MCF 10A (cell line): ENCODE measurements at regions of chr4 and their contacts with region 1.

Region 1: GRCh38 chr4:103915224-103915869 is 195.6 kb upstream of the TACR3 start:
- DNase-seq: peak; percentile 49
- H3K4me3 Mint-ChIP-seq: no peak overlapping the region
- H3K27ac Mint-ChIP-seq: peak overlapping the region; percentile 19
- H3K4me1 Mint-ChIP-seq: no peaks in the 10 kb centered on the region
- H3K27me3 Mint-ChIP-seq: no peaks in the 10 kb centered on the region
- CTCF ChIP-seq: peak; percentile 44

Region 2: GRCh38 chr4:103478729-103479128 is 436.6 kb before region 1 on chr4:
- CTCF ChIA-PET with region 1: no interaction called
- POLR2A ChIA-PET with region 1: no interaction called
- intact Hi-C with region 1: loop called (anchors 1 kb)
- DNase-seq: peak; percentile 33
- H3K4me3 Mint-ChIP-seq: no peak overlapping the region
- H3K27ac Mint-ChIP-seq: no peak overlapping the region
- H3K4me1 Mint-ChIP-seq: no peaks in the 10 kb centered on the region
- H3K27me3 Mint-ChIP-seq: no peaks in the 10 kb centered on the region
- CTCF ChIP-seq: no peak

Region 3: DNA sequence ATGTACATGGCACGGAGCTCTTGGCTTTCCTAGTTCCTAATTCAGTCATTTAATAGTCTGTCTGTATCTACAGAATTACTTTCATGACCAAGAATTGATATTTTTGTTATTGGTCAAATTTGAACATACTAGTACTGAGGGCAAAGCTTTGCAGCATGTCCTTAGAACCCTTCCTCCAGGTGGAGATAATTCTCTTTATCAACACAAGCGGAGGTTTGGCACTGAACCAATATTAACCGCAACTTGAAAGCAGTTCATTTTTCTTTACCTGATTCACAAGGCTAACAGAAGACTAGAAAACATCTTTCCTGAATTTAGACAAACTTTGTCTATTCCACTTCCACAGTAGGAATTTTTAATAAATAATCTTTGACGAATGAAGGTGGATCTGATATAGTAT is 269.4 kb before region 1 on chr4:
- CTCF ChIA-PET with region 1: interaction called, 3 read pairs
- POLR2A ChIA-PET with region 1: no interaction called
- intact Hi-C with region 1: loop called (anchors 5 kb)
- DNase-seq: peak; percentile 42
- H3K4me3 Mint-ChIP-seq: no peak overlapping the region
- H3K27ac Mint-ChIP-seq: no peak overlapping the region
- H3K4me1 Mint-ChIP-seq: no peaks in the 10 kb centered on the region
- H3K27me3 Mint-ChIP-seq: no peaks in the 10 kb centered on the region
- CTCF ChIP-seq: no peak

Region 4: GRCh38 chr4:103902730-103903129 is 12.6 kb before region 1 on chr4:
- CTCF ChIA-PET with region 1: interaction called, 14 read pairs
- POLR2A ChIA-PET with region 1: no interaction called
- intact Hi-C with region 1: no loop called
- DNase-seq: no peak
- H3K4me3 Mint-ChIP-seq: no peak overlapping the region
- H3K27ac Mint-ChIP-seq: no peak overlapping the region
- H3K4me1 Mint-ChIP-seq: no peaks in the 10 kb centered on the region
- H3K27me3 Mint-ChIP-seq: no peaks in the 10 kb centered on the region
- CTCF ChIP-seq: no peak

Region 5: DNA sequence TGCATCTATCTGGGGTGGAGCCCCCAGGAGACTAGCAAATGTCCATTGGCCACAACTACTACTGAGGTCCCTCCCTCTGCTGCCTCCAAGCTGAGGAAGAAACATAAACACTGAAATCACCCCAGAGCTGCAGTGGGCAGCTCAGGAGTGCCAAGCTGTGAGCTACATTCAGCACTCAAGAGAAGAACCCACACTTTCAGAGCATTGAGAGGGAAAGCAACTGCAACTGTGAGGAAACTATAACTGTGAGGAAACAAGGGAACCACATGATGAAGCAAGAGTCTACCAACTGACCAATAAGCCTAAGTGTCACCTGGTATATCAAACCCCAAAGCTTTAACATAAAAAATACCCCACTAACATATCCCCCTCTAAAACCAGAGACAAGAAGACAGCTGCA is 177.9 kb after region 1 on chr4:
- CTCF ChIA-PET with region 1: no interaction called
- POLR2A ChIA-PET with region 1: no interaction called
- intact Hi-C with region 1: no loop called
- DNase-seq: no peak
- H3K4me3 Mint-ChIP-seq: no peak overlapping the region
- H3K27ac Mint-ChIP-seq: no peak overlapping the region
- H3K4me1 Mint-ChIP-seq: no peaks in the 10 kb centered on the region
- H3K27me3 Mint-ChIP-seq: no peaks in the 10 kb centered on the region
- CTCF ChIP-seq: no peak

Region 6: GRCh38 chr4:105068516-105068915 is 1153.2 kb after region 1 on chr4:
- CTCF ChIA-PET with region 1: no interaction called
- POLR2A ChIA-PET with region 1: no interaction called
- intact Hi-C with region 1: no loop called
- DNase-seq: no peak
- H3K4me3 Mint-ChIP-seq: no peak overlapping the region
- H3K27ac Mint-ChIP-seq: no peak overlapping the region
- H3K4me1 Mint-ChIP-seq: no peaks in the 10 kb centered on the region
- H3K27me3 Mint-ChIP-seq: no peaks in the 10 kb centered on the region
- CTCF ChIP-seq: no peak